Calu3 (cell line): ENCODE measurements at regions of chr13 and their contacts with region 1.

Region 1: DNA sequence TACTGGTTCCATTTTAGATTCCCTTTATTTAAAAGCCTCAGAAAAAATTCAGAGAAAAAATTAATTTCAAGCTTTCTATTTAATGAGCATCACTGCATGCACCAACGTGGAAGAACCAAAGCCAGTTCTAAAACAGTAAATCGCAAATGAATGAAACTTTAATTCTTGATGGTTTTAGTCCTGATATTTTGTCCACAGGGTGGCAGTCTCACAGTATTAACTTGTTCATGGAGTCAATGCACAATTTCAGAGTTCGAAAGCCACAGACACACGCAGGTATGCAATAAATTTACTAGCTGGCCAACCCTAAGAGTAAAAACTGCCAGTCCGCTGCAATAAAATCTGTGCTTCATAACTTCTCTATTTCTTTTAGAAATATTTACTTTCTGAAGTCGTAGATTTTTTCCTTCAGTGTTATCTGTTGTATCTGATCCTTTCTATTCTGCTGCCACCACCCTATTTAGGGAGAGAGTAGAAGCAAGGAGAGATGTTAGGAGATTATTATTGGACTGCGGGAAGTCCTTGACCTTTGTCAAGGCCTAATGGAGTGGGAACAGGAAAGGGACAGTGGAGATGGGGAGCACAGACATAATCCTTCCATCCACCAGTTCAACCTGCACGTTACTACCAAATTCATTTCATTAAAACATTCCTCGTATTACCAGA is 7.0 kb upstream of the WBP4 start:
- DNase-seq: peak; percentile 32
- H3K4me3 Mint-ChIP-seq: peak overlapping the region; percentile 13
- H3K27ac Mint-ChIP-seq: no peak overlapping the region
- H3K4me1 Mint-ChIP-seq: peaks cover 56% of the 10 kb centered on the region
- H3K27me3 Mint-ChIP-seq: no peaks in the 10 kb centered on the region
- CTCF ChIP-seq: peak; percentile 31

Region 2: DNA sequence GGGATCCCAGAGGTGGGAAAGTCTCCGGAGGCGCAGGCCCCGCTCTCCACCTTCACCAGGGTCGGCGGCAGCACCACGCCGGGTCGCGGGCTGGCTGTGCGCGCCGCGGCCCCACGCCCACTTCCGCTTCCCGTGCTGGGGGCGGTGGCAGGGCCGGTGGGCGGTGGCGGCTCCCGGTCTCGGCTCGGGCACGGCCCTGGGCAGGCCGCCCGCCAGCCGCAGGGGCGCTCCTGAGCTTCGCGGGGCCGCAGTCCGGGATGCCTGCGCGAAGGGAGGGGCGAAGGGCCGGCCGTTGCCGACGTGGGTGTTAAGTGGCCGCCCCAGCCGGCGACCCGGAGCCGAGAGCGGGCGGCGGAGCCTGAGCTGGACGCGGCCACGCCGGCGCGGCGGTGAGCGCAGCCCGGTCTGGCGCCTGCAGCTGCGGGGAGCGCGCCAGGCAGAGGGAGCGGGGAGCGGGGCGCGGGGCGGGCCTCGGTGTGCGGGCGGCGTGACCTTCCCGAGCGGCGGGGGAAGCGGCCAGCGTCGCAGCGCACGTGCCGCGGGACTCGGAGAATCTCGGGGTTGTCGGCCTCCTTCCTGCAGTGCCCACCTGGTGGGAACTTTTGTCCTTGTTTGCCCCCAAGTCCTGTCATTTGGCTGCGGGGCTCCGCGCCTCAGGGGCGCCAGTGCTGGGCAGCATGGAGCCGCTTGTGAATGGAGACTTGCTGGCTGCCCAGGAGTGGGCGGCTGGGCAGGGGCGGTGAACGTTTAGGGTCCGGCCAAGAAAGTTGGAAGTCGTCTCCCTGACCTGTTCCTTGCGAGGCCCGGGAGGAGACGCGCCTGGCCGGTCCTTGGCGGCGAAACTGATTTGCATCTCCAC is 264.8 kb before region 1 on chr13 and contains the start of gene SLC25A15:
- CTCF ChIA-PET with region 1: interaction called, 3 read pairs
- intact Hi-C with region 1: loop called (anchors 10 kb)
- DNase-seq: peak; percentile 89
- H3K4me3 Mint-ChIP-seq: peak within 1 kb of the TSS; percentile 64
- H3K27ac Mint-ChIP-seq: peak within 1 kb of the TSS; percentile 44
- H3K4me1 Mint-ChIP-seq: peaks cover 16% of the 10 kb centered on the region
- H3K27me3 Mint-ChIP-seq: no peaks in the 10 kb centered on the region
- CTCF ChIP-seq: peak; percentile 15
- total RNA-seq, gene SLC25A15: 15.3 and 18.3 TPM in 2 replicates

Region 3: DNA sequence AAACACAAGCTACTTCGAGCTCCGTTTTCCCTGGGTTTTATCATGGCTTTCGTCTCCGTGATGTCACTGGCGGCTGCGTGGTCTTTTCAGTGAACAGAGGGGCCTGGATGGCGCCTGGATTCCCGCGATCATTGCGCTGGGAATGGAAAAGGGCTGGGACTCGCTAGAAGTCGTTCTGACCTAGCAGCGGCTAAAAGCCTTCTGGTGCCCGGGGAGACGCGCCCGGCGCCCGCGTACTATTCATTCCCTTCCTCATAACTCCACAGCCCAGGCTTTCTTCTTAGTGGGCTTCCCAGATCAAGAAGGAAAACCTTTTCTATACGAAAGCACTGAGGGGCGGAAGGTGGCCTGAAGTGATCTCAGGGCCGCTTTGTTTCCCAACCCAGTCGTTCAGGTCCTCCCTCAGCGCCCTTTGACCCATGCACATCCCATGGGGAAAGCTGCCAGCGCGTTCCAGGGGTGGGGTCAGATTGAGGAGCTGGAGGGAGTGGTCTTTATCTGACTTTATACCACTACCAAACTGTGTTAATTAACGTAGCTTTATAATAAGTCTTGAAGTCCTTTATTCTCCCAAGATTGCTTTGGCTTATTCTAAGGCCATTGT is 131.8 kb before region 1 on chr13:
- CTCF ChIA-PET with region 1: no interaction called
- intact Hi-C with region 1: loop called (anchors 5 kb)
- DNase-seq: no peak
- H3K4me3 Mint-ChIP-seq: peak overlapping the region; percentile 85
- H3K27ac Mint-ChIP-seq: no peak overlapping the region
- H3K4me1 Mint-ChIP-seq: peaks cover 10% of the 10 kb centered on the region
- H3K27me3 Mint-ChIP-seq: no peaks in the 10 kb centered on the region
- CTCF ChIP-seq: no peak

Region 4: DNA sequence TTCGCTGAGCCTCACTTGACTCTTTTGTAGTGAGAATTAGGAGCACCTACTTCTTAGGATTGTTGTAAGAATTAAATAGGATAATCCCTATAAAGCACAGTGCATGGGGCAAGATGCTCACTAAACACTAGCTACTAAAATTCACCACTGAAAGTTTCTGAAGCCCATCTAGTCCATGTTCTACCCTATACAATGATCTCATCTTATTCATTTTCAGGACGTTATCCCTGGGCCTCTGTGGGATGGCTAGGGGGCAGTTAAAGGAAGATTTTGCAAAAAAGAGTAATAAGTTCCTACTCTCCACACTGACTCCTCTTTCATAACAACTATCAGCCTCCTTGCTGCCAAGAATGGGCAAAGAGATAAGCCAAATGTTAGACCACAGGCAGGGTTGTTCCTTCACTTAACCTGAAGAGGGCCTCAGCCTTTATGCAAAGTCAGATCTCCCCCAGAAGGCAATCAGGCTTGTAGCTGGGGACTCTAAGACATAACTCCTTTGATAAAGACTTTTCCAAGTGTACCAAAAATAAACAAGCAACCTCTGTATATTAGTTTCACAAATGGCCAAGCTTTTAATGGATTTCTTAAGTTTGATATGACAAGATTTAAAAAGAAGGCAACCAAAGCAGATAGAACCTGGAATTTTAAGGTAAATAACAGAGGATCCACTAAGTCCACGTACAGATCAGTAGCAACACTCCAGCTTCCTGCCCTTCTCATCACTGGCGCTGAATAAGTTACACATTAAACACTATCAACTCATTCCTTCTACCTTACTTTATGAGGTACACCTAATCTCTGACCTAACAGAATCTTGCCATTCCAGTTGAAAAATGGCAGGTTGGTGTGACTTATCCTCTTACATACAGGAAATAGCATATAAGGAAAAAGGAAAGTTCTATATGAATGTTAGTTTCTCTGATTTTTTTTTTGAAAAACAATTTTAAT is 79.6 kb before region 1 on chr13:
- CTCF ChIA-PET with region 1: interaction called, 6 read pairs
- intact Hi-C with region 1: loop called (anchors 5 kb)
- DNase-seq: peak; percentile 30
- H3K4me3 Mint-ChIP-seq: peak overlapping the region; percentile 30
- H3K27ac Mint-ChIP-seq: peak overlapping the region; percentile 66
- H3K4me1 Mint-ChIP-seq: peaks cover 46% of the 10 kb centered on the region
- H3K27me3 Mint-ChIP-seq: no peaks in the 10 kb centered on the region
- CTCF ChIP-seq: peak; percentile 41

Region 5: GRCh38 chr13:40992678-40993518 is 61.4 kb before region 1 on chr13:
- CTCF ChIA-PET with region 1: no interaction called
- intact Hi-C with region 1: loop called (anchors 2 kb)
- DNase-seq: no peak
- H3K4me3 Mint-ChIP-seq: peak overlapping the region; percentile 52
- H3K27ac Mint-ChIP-seq: peak overlapping the region; percentile 56
- H3K4me1 Mint-ChIP-seq: peaks cover 34% of the 10 kb centered on the region
- H3K27me3 Mint-ChIP-seq: no peaks in the 10 kb centered on the region
- CTCF ChIP-seq: no peak

Region 6: GRCh38 chr13:41019011-41019487 is 35.3 kb before region 1 on chr13 and contains the start of gene ELF1:
- CTCF ChIA-PET with region 1: no interaction called
- intact Hi-C with region 1: loop called (anchors 2 kb)
- DNase-seq: peak; percentile 49
- H3K4me3 Mint-ChIP-seq: peak within 1 kb of the TSS; percentile 67
- H3K27ac Mint-ChIP-seq: peak within 1 kb of the TSS; percentile 93
- H3K4me1 Mint-ChIP-seq: no peaks in the 10 kb centered on the region
- H3K27me3 Mint-ChIP-seq: no peaks in the 10 kb centered on the region
- CTCF ChIP-seq: no peak
- total RNA-seq, gene ELF1: 63.4 and 63.5 TPM in 2 replicates

Region 7: DNA sequence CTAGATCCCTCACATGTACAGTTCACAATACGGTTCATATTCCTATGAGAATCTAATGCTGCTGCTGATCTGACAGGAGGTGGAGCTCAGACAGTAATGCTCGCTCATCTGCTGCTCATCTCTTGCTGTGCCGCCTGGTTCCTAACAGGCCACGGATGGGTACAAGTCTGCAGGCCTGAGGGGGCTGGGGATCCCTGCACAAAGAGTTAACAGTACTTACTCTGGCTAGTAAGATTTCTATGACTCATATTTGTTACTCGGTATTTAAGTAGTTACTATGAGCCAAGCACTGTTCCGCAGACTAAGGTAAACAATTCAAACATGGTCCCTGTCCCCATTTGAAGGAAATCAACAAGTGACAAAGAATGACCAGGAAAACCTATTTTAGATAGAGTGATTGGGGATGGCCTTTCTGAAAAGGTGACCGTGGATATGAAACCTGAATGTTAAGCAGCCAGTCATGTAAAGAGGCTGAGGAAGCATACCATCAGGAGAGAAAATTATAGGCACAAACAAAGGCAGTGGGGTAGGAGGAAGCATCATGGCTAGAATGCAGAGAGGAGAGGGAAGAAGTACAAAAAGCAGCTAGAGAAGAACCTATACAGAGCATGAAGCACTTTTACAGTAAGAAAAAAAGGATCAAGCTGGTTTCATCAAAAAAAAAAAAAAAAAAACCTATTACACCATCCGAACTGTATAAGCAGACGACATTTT is 13.6 kb before region 1 on chr13:
- CTCF ChIA-PET with region 1: no interaction called
- intact Hi-C with region 1: no loop called
- DNase-seq: no peak
- H3K4me3 Mint-ChIP-seq: no peak overlapping the region
- H3K27ac Mint-ChIP-seq: no peak overlapping the region
- H3K4me1 Mint-ChIP-seq: peaks cover 8% of the 10 kb centered on the region
- H3K27me3 Mint-ChIP-seq: no peaks in the 10 kb centered on the region
- CTCF ChIP-seq: no peak